Left cardiac atrium (tissue), 4 donors: ENCODE measurements at regions of chr6 and their contacts with region 1.

Region 1: GRCh38 chr6:1679687-1680065 is 70.0 kb downstream of the FOXC1 start:
- DNase-seq: no peak
- ATAC-seq: no peak

Region 2: GRCh38 chr6:1624851-1625781 is 54.6 kb before region 1 on chr6:
- intact Hi-C with region 1: loop called in 1 of 2 experiments (anchors 5 kb)
- DNase-seq: peak; percentile 65
- ATAC-seq: peak; percentile 77 to 78